Endothelial cell of umbilical vein (primary cell): ENCODE measurements at regions of chr1 and their contacts with region 1.

Region 1: GRCh38 chr1:155934097-155934935 is at the start of gene KHDC4:
- DNase-seq: peak; percentile 100
- H3K4me3 ChIP-seq: peak within 1 kb of the TSS; percentile 38 to 97 (median 92)
- H3K27ac ChIP-seq: peak within 1 kb of the TSS; percentile 60
- H3K4me1 ChIP-seq: peaks cover 46% of the 10 kb centered on the region
- H3K27me3 ChIP-seq: no peaks in the 10 kb centered on the region
- CTCF ChIP-seq: peak in 1 of 2 donors; percentile 10
- POLR2A ChIP-seq: peak; percentile 85
- total RNA-seq, gene KHDC4: 54.1 and 55.6 TPM in 2 replicates

Region 2: DNA sequence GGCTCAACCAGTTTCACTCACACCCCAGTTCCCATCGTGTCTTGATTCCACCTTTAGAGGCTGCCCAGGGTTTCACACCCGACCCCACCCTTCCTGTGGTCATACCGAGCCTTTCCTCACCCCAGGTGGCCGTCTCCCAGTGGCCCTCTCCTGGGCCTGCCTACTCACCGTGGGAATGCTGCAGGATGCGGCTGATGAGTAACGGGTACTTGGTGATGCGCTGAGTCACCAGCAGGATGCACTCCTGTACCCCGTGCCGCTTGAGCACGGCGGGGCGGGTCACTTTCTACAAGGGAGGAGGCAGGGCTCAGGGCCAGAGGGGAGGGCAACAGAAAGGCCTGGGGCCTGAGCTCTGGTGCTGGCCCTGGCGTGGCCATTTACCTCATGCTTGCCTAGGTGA is 27.6 kb after region 1 on chr1:
- CTCF ChIA-PET with region 1: interaction called, 16 read pairs
- POLR2A ChIA-PET with region 1: interaction called, 9 read pairs
- dilution Hi-C with region 1: no loop called
- intact Hi-C with region 1: no loop called
- DNase-seq: peak; percentile 91
- H3K4me3 ChIP-seq: no peak overlapping the region
- H3K27ac ChIP-seq: peak overlapping the region; percentile 86
- H3K4me1 ChIP-seq: peaks cover 22% of the 10 kb centered on the region
- H3K27me3 ChIP-seq: no peaks in the 10 kb centered on the region
- CTCF ChIP-seq: peak; percentile 44 to 61
- POLR2A ChIP-seq: peak; percentile 7

Region 3: GRCh38 chr1:155978325-155978972 is 44.1 kb after region 1 on chr1 and contains the start of gene ARHGEF2:
- CTCF ChIA-PET with region 1: interaction called, 20 read pairs
- POLR2A ChIA-PET with region 1: no interaction called
- dilution Hi-C with region 1: no loop called
- intact Hi-C with region 1: no loop called
- DNase-seq: peak; percentile 50
- H3K4me3 ChIP-seq: peak within 1 kb of the TSS; percentile 43 to 80 (median 76)
- H3K27ac ChIP-seq: peak within 1 kb of the TSS; percentile 55
- H3K4me1 ChIP-seq: peaks cover 68% of the 10 kb centered on the region
- H3K27me3 ChIP-seq: no peaks in the 10 kb centered on the region
- CTCF ChIP-seq: peak in 1 of 2 donors; percentile 44
- POLR2A ChIP-seq: peak; percentile 72
- total RNA-seq, gene ARHGEF2: 110 and 118 TPM in 2 replicates

Region 4: GRCh38 chr1:156001682-156002171 is 67.4 kb after region 1 on chr1:
- CTCF ChIA-PET with region 1: interaction called, 19 read pairs
- POLR2A ChIA-PET with region 1: interaction called, 8 read pairs
- dilution Hi-C with region 1: no loop called
- intact Hi-C with region 1: no loop called
- DNase-seq: no peak
- H3K4me3 ChIP-seq: no peak overlapping the region
- H3K27ac ChIP-seq: no peak overlapping the region
- H3K4me1 ChIP-seq: no peaks in the 10 kb centered on the region
- H3K27me3 ChIP-seq: no peaks in the 10 kb centered on the region
- CTCF ChIP-seq: no peak
- POLR2A ChIP-seq: no peak

Region 5: GRCh38 chr1:156054500-156055280 is 120.4 kb after region 1 on chr1 and contains the start of gene LAMTOR2:
- CTCF ChIA-PET with region 1: interaction called, 3 read pairs
- POLR2A ChIA-PET with region 1: no interaction called
- dilution Hi-C with region 1: no loop called
- intact Hi-C with region 1: loop called (anchors 1 kb)
- DNase-seq: peak; percentile 98
- H3K4me3 ChIP-seq: peak within 1 kb of the TSS; percentile 57 to 78 (median 74)
- H3K27ac ChIP-seq: peak within 1 kb of the TSS; percentile 95
- H3K4me1 ChIP-seq: peaks cover 15% of the 10 kb centered on the region
- H3K27me3 ChIP-seq: no peaks in the 10 kb centered on the region
- CTCF ChIP-seq: no peak
- POLR2A ChIP-seq: peak; percentile 78
- total RNA-seq, gene LAMTOR2: 77.7 and 80.3 TPM in 2 replicates

Region 6: GRCh38 chr1:156114101-156114916 is 180.0 kb after region 1 on chr1 and contains the start of gene LMNA:
- CTCF ChIA-PET with region 1: no interaction called
- POLR2A ChIA-PET with region 1: no interaction called
- dilution Hi-C with region 1: no loop called
- intact Hi-C with region 1: no loop called
- DNase-seq: peak; percentile 92
- H3K4me3 ChIP-seq: peak within 1 kb of the TSS; percentile 40 to 97 (median 78)
- H3K27ac ChIP-seq: peak within 1 kb of the TSS; percentile 73
- H3K4me1 ChIP-seq: peaks cover 24% of the 10 kb centered on the region
- H3K27me3 ChIP-seq: no peaks in the 10 kb centered on the region
- CTCF ChIP-seq: no peak
- POLR2A ChIP-seq: peak; percentile 98
- total RNA-seq, gene LMNA: 715 and 742 TPM in 2 replicates

Region 7: GRCh38 chr1:156129706-156130581 is 195.6 kb after region 1 on chr1:
- CTCF ChIA-PET with region 1: interaction called, 6 read pairs
- POLR2A ChIA-PET with region 1: interaction called, 10 read pairs
- dilution Hi-C with region 1: no loop called
- intact Hi-C with region 1: no loop called
- DNase-seq: peak; percentile 94
- H3K4me3 ChIP-seq: no peak overlapping the region
- H3K27ac ChIP-seq: peak overlapping the region; percentile 94
- H3K4me1 ChIP-seq: peaks cover 54% of the 10 kb centered on the region
- H3K27me3 ChIP-seq: no peaks in the 10 kb centered on the region
- CTCF ChIP-seq: peak; percentile 94
- POLR2A ChIP-seq: peak; percentile 63